AG04450 (cell line): ENCODE measurements at regions of chr5 and their contacts with region 1.

Region 1: GRCh38 chr5:159156426-159157238 is 52.7 kb downstream of the RNF145 start:
- DNase-seq: peak; percentile 59
- H3K4me3 ChIP-seq: no peak overlapping the region
- H3K27ac ChIP-seq: no peak overlapping the region
- H3K27me3 ChIP-seq: no peaks in the 10 kb centered on the region
- CTCF ChIP-seq: peak; percentile 88

Region 2: DNA sequence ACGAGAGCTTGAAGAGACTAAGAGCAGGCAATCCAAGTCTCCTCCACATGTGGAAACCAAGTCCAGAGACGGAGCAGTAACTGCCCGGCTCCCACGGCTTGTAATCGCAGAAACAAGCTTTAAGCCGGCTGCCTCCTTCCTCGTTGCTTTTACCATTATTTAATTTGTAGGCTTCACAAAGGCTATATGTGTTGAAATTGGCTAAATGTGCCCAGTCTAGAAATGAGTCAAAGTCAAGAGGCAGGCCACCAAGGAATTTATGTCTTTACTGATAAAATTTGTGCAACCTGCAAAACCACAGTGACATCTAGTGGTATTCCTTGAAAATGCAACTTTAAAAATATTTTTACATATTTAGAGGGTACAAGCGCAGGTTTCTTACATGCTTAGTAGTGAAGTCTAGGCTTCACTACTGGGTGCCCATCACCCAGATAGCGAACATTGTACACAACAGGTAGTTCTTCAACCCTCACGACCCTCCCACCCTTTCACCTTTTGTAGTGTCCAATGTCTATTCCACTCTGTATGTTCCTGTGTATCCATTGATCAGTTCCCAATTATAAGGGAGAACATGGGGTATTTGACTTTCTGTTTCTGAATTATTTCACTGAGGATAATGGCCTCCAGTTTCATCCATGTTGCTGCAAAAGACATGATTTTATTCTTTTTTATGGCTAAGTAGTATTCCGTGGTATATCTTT is 23.4 kb before region 1 on chr5:
- CTCF ChIA-PET with region 1: interaction called, 11 read pairs
- POLR2A ChIA-PET with region 1: no interaction called
- DNase-seq: peak; percentile 15
- H3K4me3 ChIP-seq: no peak overlapping the region
- H3K27ac ChIP-seq: no peak overlapping the region
- H3K27me3 ChIP-seq: peaks cover 11% of the 10 kb centered on the region
- CTCF ChIP-seq: peak; percentile 80

Region 3: GRCh38 chr5:159198063-159199036 is 41.7 kb after region 1 on chr5:
- CTCF ChIA-PET with region 1: interaction called, 19 read pairs
- POLR2A ChIA-PET with region 1: interaction called, 3 read pairs
- DNase-seq: no peak
- H3K4me3 ChIP-seq: no peak overlapping the region
- H3K27ac ChIP-seq: no peak overlapping the region
- H3K27me3 ChIP-seq: no peaks in the 10 kb centered on the region
- CTCF ChIP-seq: no peak

Region 4: GRCh38 chr5:159257629-159258283 is 101.1 kb after region 1 on chr5:
- CTCF ChIA-PET with region 1: interaction called, 11 read pairs
- POLR2A ChIA-PET with region 1: no interaction called
- DNase-seq: no peak
- H3K4me3 ChIP-seq: no peak overlapping the region
- H3K27ac ChIP-seq: no peak overlapping the region
- H3K27me3 ChIP-seq: no peaks in the 10 kb centered on the region
- CTCF ChIP-seq: no peak

Region 5: DNA sequence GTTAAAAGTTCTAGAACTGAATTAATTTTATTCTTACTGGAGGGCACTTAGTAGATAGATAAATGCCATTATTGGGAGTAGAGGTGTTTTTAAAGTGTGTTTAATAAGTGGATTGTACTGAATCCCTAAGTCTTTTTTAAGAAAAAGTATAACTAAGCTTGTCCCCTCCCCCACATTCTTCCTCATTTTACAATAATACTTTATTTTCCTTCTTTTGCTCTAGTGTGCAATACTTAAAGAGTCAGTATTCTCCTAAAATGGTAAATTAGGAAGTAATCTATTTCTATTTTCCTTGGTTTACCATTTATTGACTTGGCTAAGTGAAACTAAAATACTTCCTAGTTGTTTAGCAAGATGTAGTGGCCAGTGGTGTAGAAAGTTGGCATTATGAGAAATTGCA is 118.0 kb after region 1 on chr5:
- CTCF ChIA-PET with region 1: interaction called, 23 read pairs
- POLR2A ChIA-PET with region 1: no interaction called
- DNase-seq: no peak
- H3K4me3 ChIP-seq: no peak overlapping the region
- H3K27ac ChIP-seq: no peak overlapping the region
- H3K27me3 ChIP-seq: no peaks in the 10 kb centered on the region
- CTCF ChIP-seq: no peak

Region 6: DNA sequence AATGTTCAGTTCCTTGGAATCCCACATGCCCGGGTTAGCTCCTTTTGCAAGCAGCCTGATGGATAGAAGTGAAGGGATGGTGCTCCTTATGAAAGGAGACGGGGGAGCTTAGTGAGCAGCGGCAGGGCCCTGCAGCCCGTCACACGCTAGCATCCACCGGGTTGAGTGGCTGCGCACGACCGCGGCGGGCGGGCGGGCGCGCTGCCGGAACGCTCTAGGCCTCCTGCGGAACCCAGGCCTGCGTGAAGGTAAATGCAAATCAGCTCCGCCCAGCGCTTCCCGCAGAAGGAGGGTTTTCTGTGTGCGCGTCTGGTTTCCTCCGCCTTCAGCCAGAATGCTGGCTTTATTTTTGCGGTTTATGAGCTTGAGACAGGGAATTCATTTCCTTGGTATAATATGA is 153.9 kb after region 1 on chr5:
- CTCF ChIA-PET with region 1: interaction called, 100 read pairs
- POLR2A ChIA-PET with region 1: no interaction called
- DNase-seq: no peak
- H3K4me3 ChIP-seq: no peak overlapping the region
- H3K27ac ChIP-seq: no peak overlapping the region
- H3K27me3 ChIP-seq: peaks cover 23% of the 10 kb centered on the region
- CTCF ChIP-seq: no peak

Region 7: DNA sequence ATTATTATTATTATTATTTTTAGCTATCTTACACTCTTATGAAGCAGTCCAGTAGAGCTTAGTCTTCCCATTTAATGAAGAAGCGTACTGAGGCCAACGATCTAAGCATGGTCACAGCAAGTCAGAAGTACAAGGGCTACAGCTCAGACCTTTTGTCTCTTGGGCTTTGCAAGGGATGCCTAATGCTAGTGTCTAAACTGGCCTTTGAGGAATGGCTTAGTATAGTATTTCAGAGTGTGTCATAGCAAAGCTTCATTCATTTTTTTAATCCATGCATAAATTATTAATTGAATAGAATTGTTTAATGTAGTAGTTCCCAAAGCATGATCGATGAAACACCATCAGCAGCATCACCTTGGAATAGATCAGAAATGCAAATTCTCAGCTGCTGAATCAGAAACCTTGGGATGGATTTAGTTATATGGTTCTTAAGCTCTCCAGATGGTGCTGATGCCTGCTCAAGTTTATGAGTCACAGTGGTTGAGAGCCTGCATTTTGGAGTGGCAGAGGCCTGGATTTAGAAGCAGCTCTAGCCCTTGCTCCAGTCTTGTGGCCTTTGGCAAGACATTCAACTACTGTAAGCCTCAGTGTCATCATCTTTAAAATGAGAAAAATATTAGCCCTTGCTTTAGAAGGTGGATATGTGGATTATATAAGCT is 167.6 kb after region 1 on chr5:
- CTCF ChIA-PET with region 1: interaction called, 100 read pairs
- POLR2A ChIA-PET with region 1: no interaction called
- DNase-seq: peak; percentile 72
- H3K4me3 ChIP-seq: no peak overlapping the region
- H3K27ac ChIP-seq: no peak overlapping the region
- H3K27me3 ChIP-seq: no peaks in the 10 kb centered on the region
- CTCF ChIP-seq: no peak